ENCODE measurements at regions of chr17 and their contacts with region 1.

Region 1: GRCh38 chr17:28125530-28126378 is 83.3 kb downstream of the NLK start:
- DNase-seq: no peak
- H3K4me3 ChIP-seq: no peak overlapping the region
- H3K27ac ChIP-seq: no peak overlapping the region
- H3K4me1 ChIP-seq: peaks cover 0 to 17% (median 11%) of the 10 kb centered on the region in 4 donors
- H3K27me3 ChIP-seq: no peaks in the 10 kb centered on the region
- CTCF ChIP-seq: no peak
- EP300 ChIP-seq: no peak
- POLR2A ChIP-seq: no peak

Region 2: GRCh38 chr17:28065706-28066105 is 60.0 kb before region 1 on chr17:
- in situ Hi-C with region 1: loop called in 1 of 4 experiments (anchors 10 kb)
- intact Hi-C with region 1: no loop called
- DNase-seq: no peak
- H3K4me3 ChIP-seq: no peak overlapping the region
- H3K27ac ChIP-seq: no peak overlapping the region
- H3K4me1 ChIP-seq: peaks cover 0 to 7% (median 2%) of the 10 kb centered on the region in 4 donors
- H3K27me3 ChIP-seq: no peaks in the 10 kb centered on the region
- CTCF ChIP-seq: no peak
- EP300 ChIP-seq: no peak
- POLR2A ChIP-seq: no peak

Measured in transverse colon (tissue), 4 donors.